ENCODE measurements at regions of chr1 and their contacts with region 1.

Region 1: DNA sequence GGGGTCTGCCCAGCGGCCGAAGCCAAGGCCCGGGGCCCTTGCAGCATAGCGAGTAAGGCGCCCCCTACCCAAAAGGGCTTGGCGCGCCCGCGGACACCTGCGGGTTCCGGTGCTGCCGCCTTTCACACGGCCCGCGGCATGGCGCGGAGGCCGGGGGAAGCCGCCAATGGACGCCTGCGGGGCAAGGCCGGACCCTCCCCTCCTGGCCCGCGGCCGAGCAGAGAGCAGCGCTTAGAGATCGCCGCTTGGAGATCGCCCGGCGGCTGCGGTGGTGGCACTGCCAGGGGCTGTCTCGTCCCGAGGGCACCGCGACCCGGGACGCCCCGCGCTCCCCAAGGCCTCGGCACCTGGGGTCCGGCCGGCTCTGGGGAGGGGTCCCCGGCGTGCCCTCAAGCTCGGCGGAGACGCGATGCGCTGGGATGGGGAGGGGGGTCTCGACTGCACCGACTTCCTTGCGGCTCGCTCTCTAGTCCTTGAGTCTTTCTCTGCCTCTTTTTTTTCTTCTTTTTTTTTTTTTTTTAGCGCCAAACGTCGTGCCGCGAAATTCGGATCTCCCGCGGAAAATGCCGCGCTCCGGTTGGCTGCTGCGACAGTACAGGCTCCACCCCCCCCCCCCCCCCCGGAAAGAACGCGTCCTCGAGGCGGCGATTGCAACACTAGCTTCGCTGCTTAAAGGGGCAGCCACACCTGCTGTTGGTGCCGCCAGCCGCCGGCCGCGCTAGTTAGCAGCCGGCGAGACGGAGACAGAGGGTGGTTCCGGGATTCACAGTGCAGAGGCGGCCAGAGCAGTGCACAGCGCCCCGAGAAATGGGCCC is at the start of gene E2F2:
- DNase-seq: peak; percentile 78 to 86 (median 82)
- H3K4me3 ChIP-seq: peak within 1 kb of the TSS; percentile 40 to 64
- H3K4me3 Mint-ChIP-seq: peak within 1 kb of the TSS; percentile 90 to 96 (median 92)
- H3K27ac ChIP-seq: peak within 1 kb of the TSS; percentile 60
- H3K27ac Mint-ChIP-seq: peak within 1 kb of the TSS; percentile 86 to 97 (median 94)
- H3K4me1 ChIP-seq: peaks cover 82% of the 10 kb centered on the region
- H3K4me1 Mint-ChIP-seq: peaks cover 58 to 90% (median 80%) of the 10 kb centered on the region in 4 donors
- H3K27me3 ChIP-seq: no peaks in the 10 kb centered on the region
- H3K27me3 Mint-ChIP-seq: no peaks in the 10 kb centered on the region
- total RNA-seq, gene E2F2: 1.1 to 1.2 TPM

Region 2: GRCh38 chr1:22963044-22963677 is 567.8 kb before region 1 on chr1:
- CTCF ChIA-PET with region 1: no interaction called
- POLR2A ChIA-PET with region 1: no interaction called
- intact Hi-C with region 1: no loop called
- DNase-seq: no peak
- H3K4me3 ChIP-seq: no peak overlapping the region
- H3K4me3 Mint-ChIP-seq: no peak overlapping the region
- H3K27ac ChIP-seq: no peak overlapping the region
- H3K27ac Mint-ChIP-seq: peak overlapping the region in 1 of 7 donors; percentile 29
- H3K4me1 ChIP-seq: no peaks in the 10 kb centered on the region
- H3K4me1 Mint-ChIP-seq: no peaks in the 10 kb centered on the region
- H3K27me3 ChIP-seq: no peaks in the 10 kb centered on the region
- H3K27me3 Mint-ChIP-seq: peaks cover 9 to 16% of the 10 kb centered on the region in 2 donors

Region 3: DNA sequence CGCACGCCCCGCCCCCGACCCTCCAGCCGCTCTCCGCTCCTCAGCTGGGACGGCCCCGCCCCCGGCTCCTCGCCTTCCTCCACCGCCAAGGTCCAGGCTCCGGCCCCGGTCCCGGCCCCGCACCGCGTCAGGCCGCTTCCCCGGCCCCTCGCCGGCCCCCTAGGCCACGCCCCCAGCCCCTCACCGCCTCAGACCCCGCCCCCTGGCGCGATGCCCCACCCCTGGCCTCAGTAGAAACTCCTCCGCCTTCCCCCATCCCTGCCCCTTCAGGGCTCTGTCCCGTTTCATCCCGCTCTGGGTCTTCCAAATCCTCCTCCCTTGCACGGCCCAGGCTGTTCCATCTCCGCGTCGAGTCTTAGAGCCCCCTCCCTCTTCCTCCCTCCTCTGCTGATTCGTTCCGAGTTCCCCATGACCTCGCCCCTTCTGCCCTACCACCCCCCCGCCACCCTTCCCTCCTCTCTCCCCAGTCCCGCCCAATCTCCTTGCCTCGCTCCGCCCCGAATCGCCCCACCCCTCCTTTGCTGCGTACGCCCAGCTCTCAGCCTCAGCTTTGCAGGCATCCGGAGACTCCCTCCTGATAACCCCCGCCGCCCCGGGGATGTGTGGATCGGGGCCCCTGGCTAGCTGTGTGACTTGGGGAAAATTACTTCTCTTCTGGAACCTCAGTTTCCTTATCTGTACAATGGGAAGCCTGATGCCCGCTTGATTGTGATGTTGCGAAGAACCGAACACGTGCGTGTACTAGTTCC is 46.5 kb before region 1 on chr1:
- CTCF ChIA-PET with region 1: interaction called, 6 read pairs
- POLR2A ChIA-PET with region 1: interaction called, 28 read pairs
- intact Hi-C with region 1: loop called (anchors 1 kb)
- DNase-seq: peak; percentile 88 to 95 (median 92)
- H3K4me3 ChIP-seq: peak overlapping the region in 1 of 2 donors; percentile 64
- H3K4me3 Mint-ChIP-seq: peak overlapping the region; percentile 87 to 94 (median 89)
- H3K27ac ChIP-seq: peak overlapping the region; percentile 6
- H3K27ac Mint-ChIP-seq: peak overlapping the region in 6 of 7 donors; percentile 79 to 95 (median 88)
- H3K4me1 ChIP-seq: peaks cover 15% of the 10 kb centered on the region
- H3K4me1 Mint-ChIP-seq: peaks cover 11 to 20% (median 16%) of the 10 kb centered on the region in 4 donors
- H3K27me3 ChIP-seq: no peaks in the 10 kb centered on the region
- H3K27me3 Mint-ChIP-seq: peaks cover 3 to 6% of the 10 kb centered on the region in 2 donors

Region 4: GRCh38 chr1:23507507-23507906 is 23.4 kb before region 1 on chr1:
- CTCF ChIA-PET with region 1: interaction called, 924 read pairs
- POLR2A ChIA-PET with region 1: interaction called, 135 read pairs
- intact Hi-C with region 1: no loop called
- DNase-seq: no peak
- H3K4me3 ChIP-seq: no peak overlapping the region
- H3K4me3 Mint-ChIP-seq: no peak overlapping the region
- H3K27ac ChIP-seq: no peak overlapping the region
- H3K27ac Mint-ChIP-seq: peak overlapping the region in 3 of 7 donors; percentile 47 to 61 (median 48)
- H3K4me1 ChIP-seq: no peaks in the 10 kb centered on the region
- H3K4me1 Mint-ChIP-seq: peaks cover 0 to 2% (median 0%) of the 10 kb centered on the region in 4 donors
- H3K27me3 ChIP-seq: no peaks in the 10 kb centered on the region
- H3K27me3 Mint-ChIP-seq: no peaks in the 10 kb centered on the region

Region 5: GRCh38 chr1:23514111-23514679 is 16.8 kb before region 1 on chr1:
- CTCF ChIA-PET with region 1: interaction called, 24 read pairs
- POLR2A ChIA-PET with region 1: interaction called, 41 read pairs
- intact Hi-C with region 1: no loop called
- DNase-seq: no peak
- H3K4me3 ChIP-seq: no peak overlapping the region
- H3K4me3 Mint-ChIP-seq: no peak overlapping the region
- H3K27ac ChIP-seq: no peak overlapping the region
- H3K27ac Mint-ChIP-seq: peak overlapping the region in 3 of 7 donors; percentile 31 to 76 (median 46)
- H3K4me1 ChIP-seq: no peaks in the 10 kb centered on the region
- H3K4me1 Mint-ChIP-seq: peaks cover 0 to 5% (median 2%) of the 10 kb centered on the region in 4 donors
- H3K27me3 ChIP-seq: no peaks in the 10 kb centered on the region
- H3K27me3 Mint-ChIP-seq: no peaks in the 10 kb centered on the region

Measured in CD4-positive, alpha-beta memory T cell (primary cell).